MCF 10A (cell line): ENCODE measurements at regions of chr13 and their contacts with region 1.

Region 1: DNA sequence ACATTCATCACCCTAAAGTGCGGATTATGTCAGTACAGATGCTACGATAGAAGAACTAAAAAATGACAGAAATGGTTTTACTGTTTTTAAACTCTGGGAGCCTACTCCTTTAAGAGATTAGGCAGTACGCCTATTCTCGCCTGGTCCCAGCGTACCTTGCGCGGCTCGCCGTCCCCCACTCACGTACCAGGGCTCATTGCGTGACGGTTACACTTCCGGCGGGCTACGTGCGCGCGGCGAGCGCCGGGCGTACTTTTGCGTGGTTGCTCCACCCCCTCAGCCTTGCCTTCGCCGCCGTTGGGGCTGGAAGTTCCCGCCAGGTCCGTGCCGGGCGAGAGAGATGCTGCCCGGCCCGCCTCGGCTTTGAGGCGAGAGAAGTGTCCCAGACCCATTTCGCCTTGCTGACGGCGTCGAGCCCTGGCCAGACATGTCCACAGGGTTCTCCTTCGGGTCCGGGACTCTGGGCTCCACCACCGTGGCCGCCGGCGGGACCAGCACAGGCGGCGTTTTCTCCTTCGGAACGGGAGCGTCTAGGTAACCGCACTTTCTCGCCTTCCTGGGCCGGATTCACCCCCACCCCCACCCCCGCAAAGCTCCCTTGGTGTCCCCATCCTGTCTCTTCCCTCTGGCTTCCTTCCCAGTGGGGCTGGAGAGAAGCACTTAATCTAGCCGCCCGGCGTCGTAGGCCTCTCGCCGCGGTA is at the start of gene NUP58:
- DNase-seq: peak; percentile 95
- H3K4me3 Mint-ChIP-seq: peak within 1 kb of the TSS; percentile 89
- H3K27ac Mint-ChIP-seq: peak within 1 kb of the TSS; percentile 85
- H3K4me1 Mint-ChIP-seq: peaks cover 24% of the 10 kb centered on the region
- H3K27me3 Mint-ChIP-seq: peaks cover under 1% of the 10 kb centered on the region
- CTCF ChIP-seq: no peak
- total RNA-seq, gene NUP58: 106 and 116 TPM in 2 replicates

Region 2: DNA sequence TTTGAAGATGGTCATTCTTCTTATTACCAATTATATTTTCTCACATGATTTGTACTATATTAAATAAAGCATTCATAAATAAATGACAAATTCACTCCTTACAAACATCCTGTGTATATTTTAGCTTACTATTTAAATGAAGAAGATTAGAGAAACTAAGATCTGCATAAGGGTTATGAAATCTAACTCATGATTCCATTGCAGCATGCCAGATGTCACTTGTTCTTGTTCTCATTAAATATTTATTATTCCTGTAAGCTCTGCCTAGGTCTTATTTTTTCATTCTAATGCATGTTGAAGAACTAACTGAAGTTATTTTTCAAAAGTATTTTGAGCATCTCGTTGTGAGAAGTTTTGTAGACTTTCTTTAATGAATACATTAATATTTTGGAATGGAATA is 18.3 kb after region 1 on chr13:
- CTCF ChIA-PET with region 1: interaction called, 9 read pairs
- POLR2A ChIA-PET with region 1: interaction called, 186 read pairs
- intact Hi-C with region 1: no loop called
- DNase-seq: no peak
- H3K4me3 Mint-ChIP-seq: no peak overlapping the region
- H3K27ac Mint-ChIP-seq: peak overlapping the region; percentile 93
- H3K4me1 Mint-ChIP-seq: peaks cover 17% of the 10 kb centered on the region
- H3K27me3 Mint-ChIP-seq: no peaks in the 10 kb centered on the region
- CTCF ChIP-seq: no peak